Heart right ventricle (tissue), 16 donors: ENCODE measurements at regions of chr14 and their contacts with region 1.

Region 1: DNA sequence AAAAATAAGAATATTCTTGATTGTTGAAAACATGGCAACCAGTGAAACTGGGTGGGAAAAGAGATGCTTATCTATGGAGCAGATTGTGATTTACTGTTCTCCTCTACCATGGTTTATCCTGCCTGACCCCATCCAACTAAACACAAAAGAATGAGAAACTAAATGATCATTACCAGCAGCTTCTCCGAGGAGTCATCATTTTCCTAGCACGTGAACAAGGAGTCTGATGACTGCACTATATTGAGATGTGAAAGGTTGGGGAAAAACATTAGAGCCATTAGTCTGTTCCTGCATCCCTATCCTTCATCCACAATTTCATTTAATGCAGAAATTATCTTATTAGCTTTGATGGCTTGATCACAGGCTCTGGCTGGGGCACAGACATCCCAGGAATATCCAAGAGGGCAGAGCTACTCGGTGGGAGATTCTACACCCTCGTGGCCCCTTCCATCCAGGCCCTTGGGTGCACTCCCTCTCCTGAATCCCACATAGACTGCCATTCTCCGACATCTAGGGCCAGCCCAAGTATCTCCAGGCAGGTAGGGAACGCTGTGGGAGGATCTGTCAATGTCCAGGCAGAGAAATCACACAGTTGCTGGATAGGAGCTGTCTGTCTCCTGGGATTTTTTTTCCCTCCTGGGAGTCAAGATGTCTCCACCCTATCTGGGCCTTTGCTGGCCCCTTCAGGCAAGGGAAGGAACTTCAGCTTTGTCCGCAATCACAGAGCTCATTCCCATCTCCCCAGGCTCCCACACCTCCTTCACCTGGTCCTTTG is 43.3 kb upstream of the DHRS4 start:
- DNase-seq: no peak
- ATAC-seq: peak in 3 of 8 donors; percentile 27 to 38 (median 30)
- H3K4me3 ChIP-seq: no peak overlapping the region
- H3K27ac ChIP-seq: no peak overlapping the region
- H3K4me1 ChIP-seq: peaks cover 0 to 1% (median 0%) of the 10 kb centered on the region in 9 donors
- H3K27me3 ChIP-seq: peaks cover 0 to 10% (median 0%) of the 10 kb centered on the region in 7 donors
- CTCF ChIP-seq: peak; percentile 25 to 73 (median 45)

Region 2: GRCh38 chr14:23727566-23728335 is 182.5 kb before region 1 on chr14:
- intact Hi-C with region 1: loop called in 2 of 10 experiments (anchors 2 to 5 kb)
- DNase-seq: no peak
- ATAC-seq: peak in 7 of 8 donors; percentile 16 to 79 (median 48)
- H3K4me3 ChIP-seq: no peak overlapping the region
- H3K27ac ChIP-seq: no peak overlapping the region
- H3K4me1 ChIP-seq: no peaks in the 10 kb centered on the region
- H3K27me3 ChIP-seq: peaks cover 0 to 9% (median 0%) of the 10 kb centered on the region in 7 donors
- CTCF ChIP-seq: peak in 8 of 9 donors; percentile 5 to 43 (median 32)